HCT116 (cell line): ENCODE measurements at regions of chr17 and their contacts with region 1.

Region 1: GRCh38 chr17:77331301-77331864 is 190.6 kb downstream of the SEC14L1 start:
- DNase-seq: peak; percentile 58
- ATAC-seq: peak; percentile 91
- H3K4me3 ChIP-seq: no peak overlapping the region
- H3K27ac ChIP-seq: no peak overlapping the region
- H3K4me1 ChIP-seq: peaks cover 23 to 41% of the 10 kb centered on the region in 2 experiments
- H3K27me3 ChIP-seq: no peaks in the 10 kb centered on the region
- CTCF ChIP-seq: peak; percentile 86 to 99 (median 96); a peak in 5 of 6 replicates
- POLR2A ChIP-seq: no peak
- RAD21 ChIP-seq: peak; percentile 99

Region 2: DNA sequence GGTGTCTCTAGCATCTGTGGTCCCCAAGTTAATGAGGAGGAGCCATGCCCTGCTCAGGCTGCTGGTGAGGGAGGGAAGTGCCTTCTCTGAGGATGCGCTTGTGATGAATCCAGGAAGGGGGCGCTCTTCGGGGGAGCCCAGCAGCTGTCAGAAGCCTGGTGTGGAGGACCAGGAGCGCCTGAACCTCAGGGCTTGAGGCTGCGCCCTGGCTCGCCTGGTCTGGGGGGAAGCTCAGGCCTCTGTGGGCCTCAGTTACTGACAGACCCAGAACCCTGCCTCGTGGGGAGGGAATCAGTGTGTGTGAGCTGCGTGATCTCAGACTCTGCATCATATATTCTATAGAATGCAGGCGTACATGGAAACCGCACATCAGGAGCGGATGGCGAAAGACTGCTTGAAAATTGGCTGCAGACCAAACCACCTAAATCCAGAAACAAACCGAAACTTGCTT is 64.5 kb before region 1 on chr17:
- CTCF ChIA-PET with region 1: no interaction called
- POLR2A ChIA-PET with region 1: no interaction called
- RAD21 ChIA-PET with region 1: no interaction called
- intact Hi-C with region 1: no loop called
- DNase-seq: no peak
- ATAC-seq: peak; percentile 92
- H3K4me3 ChIP-seq: no peak overlapping the region
- H3K27ac ChIP-seq: no peak overlapping the region
- H3K4me1 ChIP-seq: peaks cover 6 to 17% of the 10 kb centered on the region in 2 experiments; a peak in 3 of 4 replicates
- H3K27me3 ChIP-seq: no peaks in the 10 kb centered on the region
- CTCF ChIP-seq: peak; percentile 35 to 91 (median 84); a peak in 5 of 6 replicates
- POLR2A ChIP-seq: no peak
- RAD21 ChIP-seq: peak; percentile 44

Region 3: GRCh38 chr17:77287432-77288071 is 43.8 kb before region 1 on chr17:
- CTCF ChIA-PET with region 1: interaction called, 12 read pairs
- POLR2A ChIA-PET with region 1: interaction called, 4 read pairs
- RAD21 ChIA-PET with region 1: no interaction called
- intact Hi-C with region 1: no loop called
- DNase-seq: peak; percentile 92
- ATAC-seq: peak; percentile 60
- H3K4me3 ChIP-seq: peak overlapping the region; percentile 39 to 52
- H3K27ac ChIP-seq: peak overlapping the region; percentile 98
- H3K4me1 ChIP-seq: peaks cover 79 to 95% of the 10 kb centered on the region in 2 experiments
- H3K27me3 ChIP-seq: no peaks in the 10 kb centered on the region
- CTCF ChIP-seq: no peak
- POLR2A ChIP-seq: no peak
- RAD21 ChIP-seq: no peak

Region 4: GRCh38 chr17:77429919-77430752 is 98.8 kb after region 1 on chr17:
- CTCF ChIA-PET with region 1: interaction called, 13 read pairs
- POLR2A ChIA-PET with region 1: no interaction called
- RAD21 ChIA-PET with region 1: interaction called in 1 of 2 experiments, 8 read pairs
- intact Hi-C with region 1: loop called (anchors 2 kb)
- DNase-seq: peak; percentile 48
- ATAC-seq: peak; percentile 80
- H3K4me3 ChIP-seq: no peak overlapping the region
- H3K27ac ChIP-seq: no peak overlapping the region
- H3K4me1 ChIP-seq: peaks cover 0 to 43% of the 10 kb centered on the region in 2 experiments; a peak in 2 of 4 replicates
- H3K27me3 ChIP-seq: no peaks in the 10 kb centered on the region
- CTCF ChIP-seq: peak; percentile 69 to 94 (median 92); a peak in 5 of 6 replicates
- POLR2A ChIP-seq: no peak
- RAD21 ChIP-seq: peak; percentile 79

Region 5: DNA sequence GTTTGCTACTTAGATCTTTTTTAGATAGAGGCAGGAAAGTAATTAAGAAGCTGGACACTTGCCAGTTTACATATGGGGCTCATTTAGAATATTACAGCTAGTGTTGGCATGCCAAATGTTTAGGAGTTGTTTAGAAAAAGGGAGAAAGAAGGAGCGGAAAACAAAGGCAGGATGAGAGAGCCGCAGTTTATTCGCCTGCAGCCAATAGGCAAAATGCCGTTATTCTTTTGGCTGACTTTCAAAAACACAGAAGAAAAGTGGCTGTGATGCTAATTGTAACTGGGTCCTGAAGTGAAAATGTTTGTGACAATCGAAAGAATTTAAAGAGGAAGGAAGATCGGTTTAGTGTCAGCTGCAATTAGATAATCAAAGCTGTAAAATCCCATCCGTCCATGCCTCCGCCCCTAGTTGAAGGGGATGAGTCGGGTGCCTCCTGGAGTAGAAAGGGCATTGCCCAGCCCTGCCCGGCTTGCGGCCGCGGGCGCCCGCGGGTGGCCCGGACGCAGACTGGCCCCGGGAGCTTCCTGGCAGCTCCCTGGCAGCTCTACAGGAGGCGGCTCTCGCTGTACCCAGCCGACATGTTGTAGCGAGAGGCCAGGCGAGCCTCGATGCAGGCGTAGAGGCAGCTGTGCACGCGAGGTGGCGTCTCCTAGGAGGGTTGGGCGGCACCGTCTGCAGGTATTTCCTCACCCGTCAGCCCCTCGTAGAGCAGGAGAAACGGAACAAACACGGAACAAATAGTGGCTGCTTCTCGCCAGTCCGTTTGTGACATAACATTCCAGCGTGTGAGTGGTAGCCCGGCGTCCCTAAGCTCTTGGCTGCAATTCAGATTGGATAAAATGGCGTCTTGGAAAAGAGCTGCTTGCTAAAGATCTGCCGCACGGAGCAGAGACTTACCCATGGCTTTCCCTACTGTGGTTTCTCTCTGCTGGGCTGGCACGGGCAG is 709.3 kb after region 1 on chr17:
- CTCF ChIA-PET with region 1: no interaction called
- POLR2A ChIA-PET with region 1: no interaction called
- RAD21 ChIA-PET with region 1: no interaction called
- intact Hi-C with region 1: no loop called
- DNase-seq: peak; percentile 56
- ATAC-seq: peak; percentile 91
- H3K4me3 ChIP-seq: peak overlapping the region; percentile 56 to 67
- H3K27ac ChIP-seq: peak overlapping the region; percentile 75
- H3K4me1 ChIP-seq: peaks cover 17 to 30% of the 10 kb centered on the region in 2 experiments
- H3K27me3 ChIP-seq: no peaks in the 10 kb centered on the region
- CTCF ChIP-seq: peak in 2 of 3 experiments; percentile 15 to 27; a peak in 2 of 6 replicates
- POLR2A ChIP-seq: peak; percentile 63
- RAD21 ChIP-seq: no peak; the same call in 1 of the 2 replicates